HEK293 (cell line): ENCODE measurements at regions of chr3 and their contacts with region 1.

Region 1: DNA sequence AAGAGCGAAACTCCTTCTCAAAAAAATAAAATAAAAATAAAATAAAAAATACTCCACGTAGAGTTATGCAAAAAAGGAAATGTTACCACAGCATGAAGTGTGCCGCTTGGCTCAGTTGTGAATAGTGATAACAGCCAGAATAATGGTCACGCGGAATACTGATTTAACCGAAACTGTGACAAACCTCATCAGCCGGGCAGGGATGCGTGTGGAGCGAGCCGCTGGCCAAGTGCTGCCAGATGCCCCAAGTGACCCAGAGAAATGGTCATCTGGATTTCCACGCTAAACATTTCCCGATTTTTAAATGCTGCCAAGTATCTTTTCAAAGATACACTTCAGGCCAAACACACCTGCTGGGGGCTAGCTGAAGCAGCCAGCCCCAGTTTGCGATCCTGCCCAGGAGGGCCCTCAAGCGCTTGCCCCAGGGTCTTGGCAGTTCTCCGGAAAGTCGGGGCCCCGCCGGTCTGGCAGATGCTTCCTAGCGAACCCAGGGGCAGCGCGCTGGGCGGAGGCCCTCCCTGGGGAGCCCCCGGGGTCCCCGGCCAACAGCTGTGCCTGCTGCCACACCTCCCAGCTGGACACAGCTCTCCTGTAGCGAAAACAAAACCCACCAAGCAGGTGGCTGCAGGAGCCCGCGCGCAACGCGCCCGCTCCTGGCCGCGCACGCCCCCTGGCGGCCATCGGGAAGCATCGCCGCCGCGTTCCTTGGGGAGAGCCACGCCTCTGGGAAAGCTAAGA is 35.1 kb downstream of the CMTM6 start:
- H3K4me3 ChIP-seq: no peak overlapping the region
- H3K27ac ChIP-seq: no peak overlapping the region
- H3K4me1 ChIP-seq: no peaks in the 10 kb centered on the region; the same call in 1 of the 2 replicates
- CTCF ChIP-seq: peak; percentile 77; the same call in 1 of the 2 replicates

Region 2: DNA sequence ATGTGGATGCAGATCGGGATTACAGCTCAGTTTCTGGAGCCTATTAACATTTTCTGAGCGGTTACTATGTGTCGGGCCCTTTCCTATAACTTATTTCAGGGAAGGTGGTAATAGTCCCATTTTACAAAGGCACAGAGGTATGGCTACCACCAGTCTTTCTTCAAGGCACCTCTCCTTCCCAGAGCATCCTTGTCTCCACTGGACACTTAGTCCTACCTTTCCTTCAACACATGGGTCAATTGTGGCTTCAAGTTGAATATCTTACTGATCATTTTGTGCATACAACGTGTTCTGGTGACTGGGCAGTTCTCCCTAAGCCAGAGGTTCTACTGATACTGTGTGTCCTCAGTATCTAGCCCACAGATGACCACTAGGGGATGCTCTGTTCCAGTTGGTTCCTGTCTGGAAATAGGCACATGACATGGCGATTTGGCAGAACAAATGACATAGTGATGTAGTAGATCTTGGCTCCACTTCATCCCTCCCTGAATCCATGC is 289.8 kb before region 1 on chr3:
- CTCF ChIA-PET with region 1: interaction called, 11 read pairs
- POLR2A ChIA-PET with region 1: no interaction called
- H3K4me3 ChIP-seq: no peak overlapping the region
- H3K27ac ChIP-seq: no peak overlapping the region
- H3K4me1 ChIP-seq: no peaks in the 10 kb centered on the region
- CTCF ChIP-seq: peak; percentile 61

Region 3: DNA sequence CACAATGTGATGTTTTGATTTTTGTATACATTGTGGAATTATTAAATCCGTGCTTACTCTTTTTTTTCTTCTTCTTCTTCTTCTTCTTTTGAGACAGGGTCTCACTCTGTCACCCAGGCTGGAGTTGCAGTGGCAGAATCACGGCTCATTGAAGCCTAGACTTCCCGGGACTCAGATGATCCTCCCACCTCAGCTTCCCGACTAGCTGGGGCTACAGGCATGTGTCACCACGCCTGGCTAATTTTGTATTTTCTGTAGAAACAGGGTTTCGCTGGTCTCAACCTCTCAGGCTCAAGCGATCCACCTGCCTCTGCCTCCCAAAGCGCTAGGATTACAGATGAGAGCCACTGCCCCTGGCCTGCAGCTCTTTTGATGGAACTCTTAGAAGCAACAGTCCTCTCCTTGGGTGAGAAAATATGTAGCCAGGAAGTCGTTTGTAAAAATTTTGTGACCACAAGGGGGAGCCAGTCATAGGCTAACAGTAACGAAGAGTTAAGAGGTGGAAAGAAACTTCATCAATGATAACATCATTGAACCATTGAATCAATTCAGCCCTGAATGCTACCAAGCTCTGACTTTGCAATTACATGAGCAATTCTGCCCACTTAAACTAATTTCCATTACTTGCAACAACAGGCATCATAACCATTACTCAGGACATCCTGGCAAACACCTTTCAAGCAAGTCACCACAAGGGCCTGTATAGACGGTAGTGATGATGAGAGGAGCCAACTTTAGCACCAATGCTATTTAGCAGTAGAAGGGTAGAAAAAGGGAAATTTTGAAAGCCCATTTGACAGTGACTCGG is 92.5 kb before region 1 on chr3:
- CTCF ChIA-PET with region 1: interaction called, 57 read pairs
- POLR2A ChIA-PET with region 1: interaction called, 3 read pairs
- H3K4me3 ChIP-seq: no peak overlapping the region
- H3K27ac ChIP-seq: no peak overlapping the region
- H3K4me1 ChIP-seq: no peaks in the 10 kb centered on the region
- CTCF ChIP-seq: 0 out of 2 replicates have a peak, but pooled peaks have one; percentile 20

Region 4: DNA sequence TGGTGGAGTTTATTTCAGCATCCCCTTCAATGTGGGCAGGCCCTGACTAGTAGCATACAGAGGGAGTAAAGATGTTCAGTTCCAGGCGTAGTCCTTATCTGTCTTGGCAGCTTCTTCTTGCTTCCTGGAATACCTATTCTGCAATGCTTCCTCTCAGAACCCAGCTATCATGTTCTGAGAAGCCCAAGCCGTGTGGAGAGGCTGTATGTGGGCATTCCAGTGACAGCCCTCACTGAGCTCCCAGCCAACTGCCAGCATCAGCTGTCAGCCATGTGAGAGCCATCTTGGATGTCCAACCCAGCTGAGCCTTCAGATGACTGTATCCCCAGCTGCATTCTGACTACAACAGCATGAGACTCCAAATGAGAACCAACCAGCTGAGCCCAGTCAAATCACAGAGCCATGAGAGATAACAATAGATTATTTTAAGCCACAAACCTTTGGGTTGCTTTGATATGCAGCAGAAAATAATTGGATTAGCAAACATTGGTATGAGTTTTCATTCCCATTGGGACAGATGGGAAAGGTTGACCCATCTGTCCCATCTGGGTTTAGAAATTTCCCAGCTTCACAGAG is 84.3 kb before region 1 on chr3:
- CTCF ChIA-PET with region 1: interaction called, 11 read pairs
- POLR2A ChIA-PET with region 1: no interaction called
- H3K4me3 ChIP-seq: no peak overlapping the region
- H3K27ac ChIP-seq: no peak overlapping the region
- H3K4me1 ChIP-seq: no peaks in the 10 kb centered on the region
- CTCF ChIP-seq: no peak

Region 5: DNA sequence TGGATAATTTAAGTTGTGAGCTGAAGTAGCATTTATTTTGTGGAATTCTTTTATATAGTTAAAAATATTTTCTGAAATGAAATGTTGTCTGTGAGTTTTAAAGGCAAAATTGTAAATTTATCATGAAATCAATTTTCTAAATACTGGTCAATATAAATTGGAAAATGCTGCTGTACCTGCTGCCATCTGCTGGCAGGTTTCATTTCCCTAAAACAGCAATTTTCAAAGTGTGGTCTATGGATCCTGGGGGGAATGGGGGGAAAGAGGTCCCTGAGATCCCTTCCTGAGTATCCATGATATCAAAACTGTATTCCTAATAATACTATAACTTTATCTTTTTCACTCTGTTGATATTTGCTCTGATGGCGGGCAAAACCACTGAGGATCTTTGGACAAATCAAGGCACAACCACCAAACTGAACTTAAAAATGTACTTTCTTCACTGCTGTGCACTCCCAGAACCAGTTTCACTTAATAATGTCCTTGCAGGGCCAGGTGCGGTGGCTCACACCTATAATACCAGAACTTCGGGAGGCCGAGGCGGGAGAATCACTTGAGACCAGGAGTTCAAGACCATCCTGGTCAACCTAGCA is 466.7 kb after region 1 on chr3:
- CTCF ChIA-PET with region 1: no interaction called
- POLR2A ChIA-PET with region 1: no interaction called
- H3K4me3 ChIP-seq: no peak overlapping the region
- H3K27ac ChIP-seq: no peak overlapping the region
- H3K4me1 ChIP-seq: no peaks in the 10 kb centered on the region
- CTCF ChIP-seq: 0 out of 2 replicates have a peak, but pooled peaks have one; percentile 13